ENCODE measurements at regions of chr11 and their contacts with region 1.

Region 1: GRCh38 chr11:85854557-85855340 is 434 bp upstream of the CCDC83 start:
- DNase-seq: peak; percentile 92
- ATAC-seq: peak; percentile 100
- H3K4me3 ChIP-seq: peak overlapping the region; percentile 37
- H3K27ac ChIP-seq: peak overlapping the region; percentile 80 to 95
- H3K4me1 ChIP-seq: peaks cover 7% of the 10 kb centered on the region
- CTCF ChIP-seq: peak; percentile 96
- EP300 ChIP-seq: no peak
- POLR2A ChIP-seq: peak; percentile 24
- RAD21 ChIP-seq: peak; percentile 92 to 100

Region 2: GRCh38 chr11:85805387-85805786 is 49.4 kb before region 1 on chr11:
- CTCF ChIA-PET with region 1: interaction called, 12 read pairs
- POLR2A ChIA-PET with region 1: interaction called, 3 read pairs
- DNase-seq: no peak
- ATAC-seq: no peak
- H3K4me3 ChIP-seq: no peak overlapping the region
- H3K27ac ChIP-seq: 0 out of 6 replicates have a peak overlapping the region, but pooled peaks of 1 of the 2 experiments have one; percentile 23
- H3K4me1 ChIP-seq: peaks cover 17% of the 10 kb centered on the region
- CTCF ChIP-seq: no peak
- EP300 ChIP-seq: no peak
- POLR2A ChIP-seq: no peak
- RAD21 ChIP-seq: no peak

Region 3: DNA sequence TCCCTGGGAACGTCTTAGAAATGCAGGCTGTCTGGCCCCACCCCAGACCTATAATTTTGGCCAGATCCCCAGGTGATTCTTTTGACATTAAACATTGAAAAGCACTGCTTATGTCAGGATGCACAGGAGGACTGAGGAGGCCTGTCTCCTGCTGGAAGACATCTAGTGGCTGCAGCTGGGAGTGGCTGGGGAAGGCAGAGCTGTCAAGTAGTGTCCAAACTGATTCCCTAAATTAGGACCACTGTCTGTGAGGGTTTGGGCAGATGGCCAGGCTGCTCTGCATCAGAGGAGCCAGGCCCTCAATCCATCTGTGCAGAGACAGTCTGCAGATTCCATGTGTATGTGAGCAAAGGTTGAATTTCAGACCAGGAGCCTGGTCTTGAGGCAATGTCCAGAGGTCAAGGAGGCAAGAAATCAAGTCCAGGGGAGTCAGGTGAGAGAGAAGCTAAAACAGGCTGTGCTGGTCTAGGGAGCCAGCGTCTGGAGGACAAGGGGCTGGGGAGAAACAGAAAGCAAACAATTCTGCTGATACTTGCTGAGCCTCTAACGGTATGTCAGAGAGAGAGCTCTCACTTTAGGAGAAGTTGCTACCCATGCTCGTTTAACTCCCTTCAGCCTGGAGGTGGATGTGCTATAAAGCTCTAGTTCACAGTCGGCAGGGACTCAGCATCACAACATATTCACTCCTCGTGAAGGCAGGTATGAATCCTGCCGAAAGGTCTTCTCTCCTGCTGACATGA is 28.5 kb before region 1 on chr11:
- CTCF ChIA-PET with region 1: interaction called, 10 read pairs
- POLR2A ChIA-PET with region 1: interaction called, 3 read pairs
- DNase-seq: peak; percentile 58 to 84
- ATAC-seq: peak; percentile 78 to 81
- H3K4me3 ChIP-seq: no peak overlapping the region
- H3K27ac ChIP-seq: peak overlapping the region; percentile 71 to 80; a peak in 4 of 6 replicates
- H3K4me1 ChIP-seq: peaks cover 62% of the 10 kb centered on the region
- CTCF ChIP-seq: peak; percentile 60
- EP300 ChIP-seq: no peak
- POLR2A ChIP-seq: no peak
- RAD21 ChIP-seq: peak; percentile 59 to 74

Region 4: DNA sequence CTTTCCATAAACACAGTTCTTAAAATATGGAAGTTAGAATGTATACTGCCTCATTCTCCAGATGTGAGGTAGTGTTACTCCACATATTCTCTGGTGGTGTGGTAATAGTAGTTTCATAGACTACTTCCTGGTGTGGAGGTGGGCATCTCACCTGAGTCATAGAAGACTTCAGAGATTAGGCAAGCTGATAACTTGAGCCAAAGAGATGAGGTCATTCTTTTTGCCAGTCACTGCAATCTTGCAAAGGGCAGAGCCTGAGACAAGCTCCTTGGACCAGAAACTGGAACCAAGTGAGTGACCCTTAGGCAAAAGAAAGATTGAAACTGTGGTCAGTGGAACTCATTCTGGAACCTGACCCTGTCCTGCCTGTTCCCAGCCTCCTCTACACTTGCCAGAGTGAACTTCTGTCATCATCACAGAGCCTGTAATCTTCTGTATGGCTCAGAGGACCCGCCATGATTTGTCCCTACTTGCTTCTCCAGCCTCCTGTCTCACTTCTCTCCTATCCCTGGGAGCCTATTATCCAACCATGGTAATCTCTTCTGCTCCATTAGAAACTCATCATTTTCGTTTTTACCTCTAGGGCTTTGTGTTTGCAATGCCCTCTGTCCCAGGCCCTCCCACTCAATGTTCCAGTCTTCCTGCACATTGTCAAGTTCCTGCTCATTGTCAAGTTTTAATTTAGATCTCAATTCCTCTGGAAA is 10.2 kb before region 1 on chr11:
- CTCF ChIA-PET with region 1: interaction called, 25 read pairs
- POLR2A ChIA-PET with region 1: interaction called, 4 read pairs
- DNase-seq: peak; percentile 87 to 89
- ATAC-seq: peak; percentile 94 to 100
- H3K4me3 ChIP-seq: no peak overlapping the region
- H3K27ac ChIP-seq: peak overlapping the region; percentile 62 to 80
- H3K4me1 ChIP-seq: peaks cover 18% of the 10 kb centered on the region
- CTCF ChIP-seq: no peak
- EP300 ChIP-seq: peak; percentile 40 to 41; a peak in 2 of 5 replicates
- POLR2A ChIP-seq: no peak
- RAD21 ChIP-seq: no peak; a peak in 1 of 5 replicates

Region 5: DNA sequence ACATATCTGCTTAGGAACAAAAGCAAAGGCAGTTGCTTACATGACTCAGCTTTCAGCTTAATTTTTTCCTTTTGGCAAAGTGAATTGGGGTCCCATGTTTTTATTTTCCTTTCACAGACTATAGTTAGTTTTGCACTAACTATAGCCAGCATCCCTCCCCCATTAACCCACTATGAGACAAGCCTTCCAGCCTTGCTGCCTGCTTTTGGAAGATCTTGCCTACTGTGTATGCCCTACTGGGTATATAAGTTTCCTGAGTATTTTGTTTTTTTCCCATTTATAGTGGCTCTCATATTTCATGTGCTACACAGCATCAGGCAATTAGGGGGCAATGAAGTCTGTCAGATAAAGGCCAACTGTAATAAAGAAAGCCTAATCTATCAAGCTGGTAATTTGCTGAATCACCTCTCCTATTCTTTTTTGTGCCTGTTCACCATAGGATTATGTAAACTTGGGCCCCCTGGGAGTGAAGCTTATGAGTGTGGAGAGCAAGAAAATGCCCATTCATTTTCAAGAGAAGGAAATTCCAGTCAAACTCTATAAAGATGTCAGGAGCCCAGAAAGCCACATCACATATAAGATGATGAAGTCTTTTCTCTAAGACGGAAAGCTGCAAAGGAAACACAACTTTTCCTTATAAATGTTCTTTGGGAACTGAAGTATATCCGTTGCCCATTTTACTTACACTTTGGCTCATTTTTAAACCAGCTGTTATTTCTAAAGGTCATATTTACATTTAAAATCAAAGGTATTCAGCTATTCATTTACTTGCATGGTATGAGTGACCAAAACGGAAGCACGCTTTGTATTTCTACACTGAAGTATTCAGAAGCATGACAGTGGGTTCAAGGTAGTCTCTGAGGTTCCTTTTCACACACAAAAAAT is 64.4 kb after region 1 on chr11:
- CTCF ChIA-PET with region 1: no interaction called
- POLR2A ChIA-PET with region 1: no interaction called
- DNase-seq: no peak
- ATAC-seq: no peak
- H3K4me3 ChIP-seq: no peak overlapping the region
- H3K27ac ChIP-seq: no peak overlapping the region
- H3K4me1 ChIP-seq: no peaks in the 10 kb centered on the region
- CTCF ChIP-seq: no peak
- EP300 ChIP-seq: no peak
- POLR2A ChIP-seq: no peak
- RAD21 ChIP-seq: no peak

Region 6: DNA sequence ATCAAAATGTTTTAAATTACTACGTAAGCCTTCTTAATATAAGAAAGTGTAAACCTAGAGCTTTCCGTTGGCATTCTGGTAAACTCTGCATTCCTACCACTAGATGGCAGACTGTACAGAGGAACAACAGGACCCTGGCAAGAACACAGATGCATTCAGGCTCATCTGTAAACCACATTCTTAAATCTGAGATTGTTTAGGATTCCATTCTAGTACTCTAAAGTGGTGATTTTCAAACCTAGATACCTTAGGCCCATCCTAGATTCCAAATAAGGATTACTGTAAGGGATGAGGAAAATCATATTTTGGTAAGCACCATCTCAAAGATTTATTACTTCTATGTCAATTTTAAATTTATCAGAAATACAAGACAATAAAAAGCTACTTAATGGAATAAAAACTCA is 187.2 kb after region 1 on chr11:
- CTCF ChIA-PET with region 1: interaction called, 13 read pairs
- POLR2A ChIA-PET with region 1: no interaction called
- DNase-seq: peak; percentile 63 to 85
- ATAC-seq: peak; percentile 85 to 90
- H3K4me3 ChIP-seq: no peak overlapping the region
- H3K27ac ChIP-seq: no peak overlapping the region
- H3K4me1 ChIP-seq: peaks cover 34% of the 10 kb centered on the region
- CTCF ChIP-seq: peak; percentile 97
- EP300 ChIP-seq: no peak
- POLR2A ChIP-seq: no peak
- RAD21 ChIP-seq: peak; percentile 84 to 85

Region 7: DNA sequence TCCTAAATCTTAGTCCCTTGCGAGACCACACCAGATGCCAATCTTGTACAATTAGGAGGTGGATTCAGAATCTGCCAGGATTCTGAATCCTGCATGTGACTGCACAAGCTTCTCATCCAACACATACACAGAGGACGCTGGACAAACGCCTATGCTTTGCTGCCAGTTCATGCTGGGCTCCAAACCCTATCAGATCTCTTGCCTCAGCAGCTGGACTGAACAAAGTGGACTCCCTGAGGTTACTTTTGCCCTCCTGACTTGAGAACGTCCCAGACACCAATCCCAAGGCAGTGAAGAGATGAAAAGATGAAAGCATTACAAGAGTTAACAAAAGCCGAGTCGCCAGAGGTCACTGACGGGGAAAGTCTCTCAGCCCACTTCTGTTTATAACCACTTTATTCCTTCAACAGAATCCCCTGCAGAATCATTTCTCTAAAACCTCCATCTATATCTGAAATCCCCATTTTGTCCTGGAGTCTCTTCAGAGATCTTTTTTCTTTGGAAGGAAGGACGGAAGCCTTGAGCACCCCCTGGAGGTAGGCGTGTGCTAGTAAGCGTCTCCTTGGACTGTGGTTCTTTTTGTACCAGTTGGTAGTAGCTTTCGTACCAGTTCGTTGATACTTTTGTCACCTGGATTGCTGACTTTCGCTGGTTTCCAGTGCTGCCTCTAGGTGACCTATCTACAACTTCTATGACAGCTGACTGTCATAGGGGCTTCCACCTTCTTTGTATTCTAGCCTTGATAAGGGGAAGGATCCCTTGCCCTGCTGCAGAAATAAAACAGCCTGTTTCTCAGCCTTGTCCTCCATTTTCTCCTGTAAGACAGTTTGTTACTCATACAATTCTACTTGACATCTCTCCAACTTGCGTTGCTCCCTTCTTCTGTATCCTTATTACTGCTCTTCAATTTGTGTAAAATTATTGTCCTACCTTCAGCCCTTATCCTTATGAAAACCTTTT is 363.7 kb after region 1 on chr11:
- CTCF ChIA-PET with region 1: interaction called, 14 read pairs
- POLR2A ChIA-PET with region 1: interaction called, 3 read pairs
- DNase-seq: peak; percentile 77 to 89
- ATAC-seq: peak; percentile 95 to 98
- H3K4me3 ChIP-seq: peak overlapping the region; percentile 22; the same call in 2 of the 3 replicates
- H3K27ac ChIP-seq: peak overlapping the region; percentile 12 to 42; a peak in 4 of 6 replicates
- H3K4me1 ChIP-seq: no peaks in the 10 kb centered on the region
- CTCF ChIP-seq: peak; percentile 84
- EP300 ChIP-seq: no peak
- POLR2A ChIP-seq: no peak
- RAD21 ChIP-seq: peak; percentile 80 to 90

Measured in A549 (cell line).